Transverse colon (tissue), 4 donors: ENCODE measurements at regions of chr2 and their contacts with region 1.

Region 1: GRCh38 chr2:205323929-205324328 is 358.4 kb upstream of the NRP2 start:
- DNase-seq: no peak
- H3K4me3 ChIP-seq: no peak overlapping the region
- H3K27ac ChIP-seq: no peak overlapping the region
- H3K4me1 ChIP-seq: no peaks in the 10 kb centered on the region
- H3K27me3 ChIP-seq: no peaks in the 10 kb centered on the region
- CTCF ChIP-seq: peak in 4 of 5 experiments; percentile 18 to 33 (median 26)
- EP300 ChIP-seq: no peak
- POLR2A ChIP-seq: no peak

Region 2: DNA sequence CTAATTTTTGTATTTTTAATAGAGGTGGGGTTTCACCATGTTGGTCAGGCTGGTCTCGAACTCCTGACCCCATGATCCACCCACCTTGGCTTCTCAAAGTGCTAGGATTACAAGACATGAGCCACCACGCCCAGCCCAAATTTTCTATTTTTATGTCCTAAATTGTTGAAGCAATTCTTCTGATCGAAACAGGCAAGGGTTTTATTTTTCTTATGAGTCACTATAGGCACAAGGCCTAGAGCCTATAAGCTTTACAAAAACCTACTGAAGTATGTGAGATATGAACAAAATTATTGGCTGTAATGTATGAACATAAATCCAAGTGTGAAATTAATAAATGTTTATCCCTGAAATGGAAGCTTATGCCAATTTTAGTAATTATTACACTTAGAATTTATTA is 105.9 kb before region 1 on chr2:
- in situ Hi-C with region 1: no loop called
- intact Hi-C with region 1: no loop called
- DNase-seq: no peak
- H3K4me3 ChIP-seq: no peak overlapping the region
- H3K27ac ChIP-seq: no peak overlapping the region
- H3K4me1 ChIP-seq: no peaks in the 10 kb centered on the region
- H3K27me3 ChIP-seq: no peaks in the 10 kb centered on the region
- CTCF ChIP-seq: no peak
- EP300 ChIP-seq: no peak
- POLR2A ChIP-seq: no peak

Region 3: GRCh38 chr2:205347899-205348298 is 24.0 kb after region 1 on chr2:
- in situ Hi-C with region 1: no loop called
- intact Hi-C with region 1: loop called (anchors 1 kb)
- DNase-seq: no peak
- H3K4me3 ChIP-seq: no peak overlapping the region
- H3K27ac ChIP-seq: no peak overlapping the region
- H3K4me1 ChIP-seq: no peaks in the 10 kb centered on the region
- H3K27me3 ChIP-seq: no peaks in the 10 kb centered on the region
- CTCF ChIP-seq: no peak
- EP300 ChIP-seq: no peak
- POLR2A ChIP-seq: no peak

Region 4: DNA sequence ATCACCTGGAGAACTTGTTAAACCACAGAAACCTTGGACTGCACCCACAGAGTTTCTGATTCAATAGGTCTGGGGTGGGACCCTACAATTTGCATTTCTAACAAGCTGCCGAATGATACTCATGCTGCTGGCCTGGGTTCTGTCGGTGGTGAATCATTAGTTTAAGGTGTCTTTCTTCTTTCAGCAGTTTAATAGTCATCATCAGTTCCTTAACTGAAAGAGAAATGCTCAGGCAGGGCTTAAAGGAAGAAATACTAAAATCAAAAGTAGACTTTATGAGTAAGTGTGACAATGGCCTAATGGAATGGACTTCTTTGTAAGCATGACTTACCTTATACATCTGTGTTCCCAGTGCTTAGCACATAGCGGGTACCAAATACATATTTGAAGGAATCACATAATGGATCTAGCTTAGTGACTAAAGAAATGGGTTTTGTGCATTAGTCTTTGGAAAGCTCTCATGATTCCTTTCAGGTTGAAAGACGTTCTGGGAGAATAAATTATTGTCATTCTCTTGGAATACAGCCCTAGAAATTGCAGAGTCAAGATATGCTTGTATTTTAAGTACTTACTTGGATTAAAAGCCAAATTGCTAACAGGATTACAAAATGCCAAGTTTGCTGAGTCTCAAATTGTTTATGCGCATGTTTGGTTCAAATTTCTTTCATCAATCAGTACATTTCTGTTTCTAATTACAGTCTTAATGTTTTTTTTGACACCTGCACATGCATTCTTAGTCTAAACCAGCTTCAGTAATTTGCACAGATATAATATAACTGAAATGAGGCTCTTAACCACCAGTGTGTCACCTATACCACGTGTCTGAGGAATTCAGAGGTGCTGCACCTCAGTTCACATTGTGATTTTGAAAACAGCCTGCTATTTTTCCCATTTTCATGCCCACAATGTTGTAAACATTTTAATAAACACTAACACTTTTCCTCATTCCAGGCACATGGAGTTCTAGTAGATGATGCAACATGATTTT is 138.0 kb after region 1 on chr2:
- in situ Hi-C with region 1: no loop called
- intact Hi-C with region 1: no loop called
- DNase-seq: no peak
- H3K4me3 ChIP-seq: no peak overlapping the region
- H3K27ac ChIP-seq: no peak overlapping the region
- H3K4me1 ChIP-seq: no peaks in the 10 kb centered on the region
- H3K27me3 ChIP-seq: no peaks in the 10 kb centered on the region
- CTCF ChIP-seq: no peak
- EP300 ChIP-seq: no peak
- POLR2A ChIP-seq: no peak